HepG2 (cell line): ENCODE measurements at regions of chr11 and their contacts with region 1.

Region 1: GRCh38 chr11:119334174-119334930 is at the start of gene RNF26:
- DNase-seq: peak; percentile 97
- ATAC-seq: peak; percentile 87
- H3K4me3 ChIP-seq: peak within 1 kb of the TSS; percentile 78 to 94 (median 87)
- H3K27ac ChIP-seq: peak within 1 kb of the TSS; percentile 71
- H3K4me1 ChIP-seq: peaks cover 55% of the 10 kb centered on the region
- H3K27me3 ChIP-seq: no peaks in the 10 kb centered on the region; a peak in 1 of 5 replicates
- CTCF ChIP-seq: no peak
- EP300 ChIP-seq: no peak
- POLR2A ChIP-seq: peak; percentile 79 to 84
- RAD21 ChIP-seq: no peak
- total RNA-seq, gene RNF26: 11.9 and 20.8 TPM in 2 replicates

Region 2: DNA sequence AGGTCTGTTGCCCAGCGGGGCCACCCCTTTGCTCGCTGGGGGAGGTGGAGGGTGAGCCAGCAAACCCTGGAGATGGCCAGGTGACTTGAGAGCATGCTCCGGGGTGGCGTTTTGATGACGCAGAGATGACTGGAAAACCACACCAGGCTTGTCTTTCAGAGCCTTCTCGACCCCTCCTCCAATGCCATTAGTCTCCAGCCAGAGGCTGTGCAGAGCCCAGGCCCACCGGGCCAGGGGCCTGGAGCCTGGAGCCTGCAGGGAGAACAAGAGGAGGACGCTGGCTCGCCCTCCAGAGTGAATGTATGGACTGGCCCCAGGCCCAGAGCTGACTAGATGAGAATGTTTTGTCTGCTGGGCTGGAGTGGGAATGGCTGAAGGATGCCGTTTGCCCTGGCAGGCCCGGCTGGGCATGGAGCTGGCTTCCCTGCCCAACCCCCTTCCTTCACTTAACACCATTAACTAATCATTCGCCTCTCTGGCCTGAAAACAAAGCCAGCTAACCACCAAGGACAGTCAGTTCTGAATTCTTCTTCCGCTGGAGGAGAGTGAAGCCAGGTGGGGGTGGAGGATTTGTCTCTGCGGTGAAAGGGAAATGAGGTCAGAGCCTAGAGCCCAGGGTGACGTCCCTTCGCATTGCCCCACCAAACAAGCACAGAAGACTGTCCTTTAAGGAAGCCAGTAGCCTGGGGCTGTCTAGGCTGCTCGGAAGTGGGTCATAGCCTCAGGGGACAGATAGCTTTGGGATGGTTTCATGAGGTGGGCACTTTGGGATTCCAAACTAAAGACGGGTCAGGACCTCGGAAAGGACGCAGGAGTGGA is 15.8 kb before region 1 on chr11:
- CTCF ChIA-PET with region 1: no interaction called
- POLR2A ChIA-PET with region 1: interaction called, 14 read pairs
- in situ Hi-C with region 1: no loop called
- intact Hi-C with region 1: loop called (anchors 2 kb)
- DNase-seq: peak; percentile 52
- ATAC-seq: peak; percentile 34
- H3K4me3 ChIP-seq: peak overlapping the region; percentile 53 to 77 (median 76)
- H3K27ac ChIP-seq: no peak overlapping the region
- H3K4me1 ChIP-seq: peaks cover 73% of the 10 kb centered on the region
- H3K27me3 ChIP-seq: peaks cover 0 to 9% of the 10 kb centered on the region in 2 experiments; a peak in 1 of 5 replicates
- CTCF ChIP-seq: no peak
- EP300 ChIP-seq: no peak
- POLR2A ChIP-seq: peak in 1 of 2 experiments; percentile 41; a peak in 1 of 4 replicates
- RAD21 ChIP-seq: no peak

Region 3: GRCh38 chr11:119381181-119381988 is 47.0 kb after region 1 on chr11 and contains the start of gene USP2:
- CTCF ChIA-PET with region 1: interaction called, 13 read pairs
- POLR2A ChIA-PET with region 1: interaction called, 22 read pairs
- in situ Hi-C with region 1: no loop called
- intact Hi-C with region 1: no loop called
- DNase-seq: peak; percentile 93
- ATAC-seq: peak; percentile 88
- H3K4me3 ChIP-seq: peak within 1 kb of the TSS; percentile 67 to 82 (median 68)
- H3K27ac ChIP-seq: peak within 1 kb of the TSS; percentile 76
- H3K4me1 ChIP-seq: peaks cover 70% of the 10 kb centered on the region
- H3K27me3 ChIP-seq: no peaks in the 10 kb centered on the region; a peak in 1 of 5 replicates
- CTCF ChIP-seq: peak; percentile 99
- EP300 ChIP-seq: peak in 1 of 2 experiments; percentile 17; a peak in 1 of 4 replicates
- POLR2A ChIP-seq: peak in 1 of 2 experiments; percentile 61; a peak in 1 of 4 replicates
- RAD21 ChIP-seq: peak; percentile 94
- total RNA-seq, gene USP2: 6.0 and 7.2 TPM in 2 replicates